Dorsolateral prefrontal cortex (tissue), 120 donors: ENCODE measurements at regions of chr14 and their contacts with region 1.

Region 1: GRCh38 chr14:90758028-90758889 is 58.0 kb downstream of the TTC7B start:
- DNase-seq: peak; percentile 66 to 93 (median 80)
- H3K4me3 ChIP-seq: peak overlapping the region; percentile 39 to 80 (median 64)
- H3K27ac ChIP-seq: peak overlapping the region; percentile 87 to 100 (median 98)
- H3K27me3 ChIP-seq: no peaks in the 10 kb centered on the region
- CTCF ChIP-seq: peak; percentile 80 to 99 (median 96)

Region 2: DNA sequence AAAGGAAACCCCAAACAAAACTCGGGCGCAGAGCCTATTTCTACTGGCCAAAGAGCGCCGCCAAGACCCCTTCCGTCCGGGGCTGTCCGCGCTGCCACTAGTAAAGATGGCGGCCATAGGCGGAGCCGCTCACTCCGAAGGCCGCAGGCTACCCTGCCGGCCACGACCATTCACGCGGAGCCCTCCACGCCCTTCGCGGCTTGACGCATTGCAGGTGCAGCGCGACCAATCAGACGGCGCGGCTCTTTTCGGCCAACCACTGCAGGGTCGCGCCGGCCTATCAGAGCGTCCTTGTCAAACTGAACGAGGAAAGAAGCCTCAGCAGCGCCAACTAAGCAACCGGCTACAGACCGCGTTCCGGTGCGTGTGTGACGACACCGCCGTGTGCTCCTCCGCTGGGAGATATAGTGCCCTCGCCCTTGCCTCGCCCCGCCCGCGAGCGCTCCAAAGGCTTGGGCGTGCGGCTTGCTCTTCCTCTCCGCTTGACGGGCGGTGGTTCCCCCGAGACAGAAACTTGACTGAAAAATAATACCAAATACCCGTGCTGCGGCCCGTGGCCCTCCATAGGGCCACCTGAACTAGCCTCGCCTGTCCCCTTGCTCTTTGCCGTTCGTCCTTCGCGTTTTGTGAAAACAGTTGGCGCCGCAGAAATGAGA is 375.1 kb before region 1 on chr14:
- intact Hi-C with region 1: loop called (anchors 5 kb)
- DNase-seq: peak; percentile 99 to 100 (median 100)
- H3K4me3 ChIP-seq: peak overlapping the region; percentile 48 to 85 (median 71)
- H3K27ac ChIP-seq: peak overlapping the region; percentile 98 to 100 (median 100)
- H3K27me3 ChIP-seq: no peaks in the 10 kb centered on the region
- CTCF ChIP-seq: peak in 53 of 56 donors; percentile 2 to 64 (median 37)

Region 3: GRCh38 chr14:90721619-90722305 is 36.5 kb before region 1 on chr14:
- intact Hi-C with region 1: loop called in 1 of 2 experiments (anchors 2 kb)
- DNase-seq: no peak
- H3K4me3 ChIP-seq: no peak overlapping the region
- H3K27ac ChIP-seq: peak overlapping the region in 1 of 59 donors; percentile 70
- H3K27me3 ChIP-seq: no peaks in the 10 kb centered on the region
- CTCF ChIP-seq: no peak

Region 4: DNA sequence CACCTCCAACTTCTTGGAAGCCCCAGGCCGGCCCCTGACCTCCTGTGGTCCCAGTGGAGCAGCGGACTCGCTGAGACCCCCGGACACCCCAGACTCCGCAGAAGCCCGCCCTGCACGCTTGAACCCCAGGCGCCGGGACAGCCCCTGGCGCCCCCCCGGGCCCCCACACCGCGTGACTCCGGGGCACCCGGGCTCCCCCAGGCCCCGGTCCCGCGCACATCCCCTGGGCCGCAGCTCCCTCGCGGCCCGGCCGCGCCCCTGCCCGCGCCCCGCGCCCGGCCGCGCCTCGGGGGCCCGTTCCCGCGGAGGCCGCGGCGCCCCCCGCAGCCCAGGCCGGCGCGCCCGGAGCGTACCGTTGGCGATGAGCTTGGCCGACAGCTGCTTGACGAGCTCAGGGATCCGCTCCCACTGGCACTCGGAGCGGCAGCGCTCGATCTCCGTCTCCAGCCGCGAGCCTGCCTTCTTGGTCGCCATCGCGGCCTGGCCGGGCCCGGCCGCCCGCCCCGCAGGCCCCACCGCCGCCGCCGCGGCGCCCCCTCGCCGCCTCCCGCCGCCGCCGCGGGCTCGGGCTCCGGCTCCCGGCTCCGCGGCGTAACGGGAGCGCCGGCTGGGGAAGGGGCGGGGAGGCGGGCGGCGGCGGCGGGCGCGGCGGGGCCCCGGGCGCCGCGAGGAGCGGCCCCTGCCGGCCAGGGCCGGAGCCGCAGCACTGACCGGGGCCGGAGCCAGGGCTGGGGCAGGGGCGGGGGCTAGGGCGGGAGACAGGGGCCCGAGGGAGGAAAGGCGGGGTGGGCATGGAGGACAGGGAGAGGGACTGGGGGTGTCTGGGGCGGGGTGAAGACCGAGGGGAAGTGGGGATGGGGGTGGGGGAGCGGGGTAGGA is 57.8 kb after region 1 on chr14 and contains the start of gene TTC7B:
- intact Hi-C with region 1: loop called (anchors 2 to 5 kb)
- DNase-seq: peak in 2 of 10 donors; percentile 36 to 49
- H3K4me3 ChIP-seq: peak within 1 kb of the TSS; percentile 29 to 90 (median 78)
- H3K27ac ChIP-seq: peak within 1 kb of the TSS in 27 of 59 donors; percentile 9 to 84 (median 40)
- H3K27me3 ChIP-seq: no peaks in the 10 kb centered on the region
- CTCF ChIP-seq: peak in 16 of 56 donors; percentile 5 to 47 (median 14)
- total RNA-seq, gene TTC7B: 90.4 to 281 (median 204) TPM

Region 5: DNA sequence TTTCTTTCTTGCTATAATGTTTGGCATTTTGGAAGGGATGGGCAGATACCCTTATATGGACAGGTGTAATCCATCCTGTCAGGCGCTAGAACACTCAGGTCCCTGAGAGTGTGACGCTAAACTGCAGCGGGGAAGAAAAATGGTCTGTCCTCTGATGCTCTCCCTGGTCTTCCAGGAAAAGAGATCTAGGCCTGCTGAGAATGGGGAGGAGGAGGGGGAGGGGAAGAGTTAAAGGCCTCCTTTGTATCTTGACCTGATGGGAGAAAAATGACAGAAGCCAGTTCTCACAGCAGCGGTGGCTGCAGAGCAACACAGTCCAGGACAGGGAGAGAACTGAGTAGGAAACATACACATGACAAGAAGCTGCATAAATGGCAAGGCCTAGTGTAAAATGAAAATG is 241.0 kb after region 1 on chr14:
- intact Hi-C with region 1: no loop called
- DNase-seq: peak in 4 of 10 donors; percentile 10 to 62 (median 46)
- H3K4me3 ChIP-seq: peak overlapping the region in 4 of 59 donors; percentile 2 to 13 (median 8)
- H3K27ac ChIP-seq: peak overlapping the region in 56 of 59 donors; percentile 0 to 91 (median 71)
- H3K27me3 ChIP-seq: no peaks in the 10 kb centered on the region
- CTCF ChIP-seq: peak in 1 of 56 donors; percentile 9